Pancreas (tissue), 10 donors: ENCODE measurements at regions of chr17 and their contacts with region 1.

Region 1: GRCh38 chr17:74467221-74467951 is 952 bp downstream of the CD300A start:
- DNase-seq: no peak
- ATAC-seq: peak in 2 of 4 donors; percentile 47 to 52
- H3K4me3 ChIP-seq: peak overlapping the region in 1 of 4 donors; percentile 32
- H3K27ac ChIP-seq: peak overlapping the region in 2 of 4 donors; percentile 9 to 33
- H3K4me1 ChIP-seq: no peaks in the 10 kb centered on the region
- H3K27me3 ChIP-seq: no peaks in the 10 kb centered on the region
- CTCF ChIP-seq: no peak

Region 2: GRCh38 chr17:74224959-74225725 is 242.2 kb before region 1 on chr17:
- intact Hi-C with region 1: loop called in 1 of 3 experiments (anchors 5 kb)
- DNase-seq: peak in 1 of 6 donors; percentile 43
- ATAC-seq: no peak
- H3K4me3 ChIP-seq: no peak overlapping the region
- H3K27ac ChIP-seq: no peak overlapping the region
- H3K4me1 ChIP-seq: no peaks in the 10 kb centered on the region
- H3K27me3 ChIP-seq: no peaks in the 10 kb centered on the region
- CTCF ChIP-seq: no peak